ENCODE measurements at regions of chr10 and their contacts with region 1.

Region 1: DNA sequence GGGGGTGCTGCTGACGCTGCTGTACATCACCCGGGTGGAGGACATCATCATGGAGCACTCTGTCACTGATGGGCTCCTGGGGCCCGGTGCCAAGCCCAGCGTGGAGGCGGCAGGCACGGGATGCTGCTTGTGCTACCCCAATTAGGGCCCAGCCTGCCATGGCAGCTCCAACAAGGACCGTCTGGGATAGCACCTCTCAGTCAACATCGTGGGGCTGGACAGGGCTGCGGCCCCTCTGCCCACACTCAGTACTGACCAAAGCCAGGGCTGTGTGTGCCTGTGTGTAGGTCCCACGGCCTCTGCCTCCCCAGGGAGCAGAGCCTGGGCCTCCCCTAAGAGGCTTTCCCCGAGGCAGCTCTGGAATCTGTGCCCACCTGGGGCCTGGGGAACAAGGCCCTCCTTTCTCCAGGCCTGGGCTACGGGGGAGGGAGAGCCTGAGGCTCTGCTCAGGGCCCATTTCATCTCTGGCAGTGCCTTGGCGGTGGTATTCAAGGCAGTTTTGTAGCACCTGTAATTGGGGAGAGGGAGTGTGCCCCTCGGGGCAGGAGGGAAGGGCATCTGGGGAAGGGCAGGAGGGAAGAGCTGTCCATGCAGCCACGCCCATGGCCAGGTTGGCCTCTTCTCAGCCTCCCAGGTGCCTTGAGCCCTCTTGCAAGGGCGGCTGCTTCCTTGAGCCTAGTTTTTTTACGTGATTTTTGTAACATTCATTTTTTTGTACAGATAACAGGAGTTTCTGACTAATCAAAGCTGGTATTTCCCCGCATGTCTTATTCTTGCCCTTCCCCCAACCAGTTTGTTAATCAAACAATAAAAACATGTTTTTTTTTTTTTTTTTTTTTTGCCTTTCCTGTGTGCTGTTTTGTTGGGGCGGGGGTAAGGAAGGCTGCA is 55.8 kb downstream of the TSPAN15 start:
- DNase-seq: peak in 1 of 9 experiments; percentile 48
- ATAC-seq: peak; percentile 6
- H3K4me3 ChIP-seq: peak overlapping the region in 1 of 2 experiments; percentile 10
- H3K4me3 Mint-ChIP-seq: peak overlapping the region; percentile 71
- H3K27ac ChIP-seq: no peak overlapping the region
- H3K27ac Mint-ChIP-seq: peak overlapping the region; percentile 62
- H3K4me1 ChIP-seq: peaks cover 4% of the 10 kb centered on the region
- H3K4me1 Mint-ChIP-seq: peaks cover 10% of the 10 kb centered on the region
- H3K27me3 ChIP-seq: no peaks in the 10 kb centered on the region
- H3K27me3 Mint-ChIP-seq: no peaks in the 10 kb centered on the region
- CTCF ChIP-seq: no peak

Region 2: DNA sequence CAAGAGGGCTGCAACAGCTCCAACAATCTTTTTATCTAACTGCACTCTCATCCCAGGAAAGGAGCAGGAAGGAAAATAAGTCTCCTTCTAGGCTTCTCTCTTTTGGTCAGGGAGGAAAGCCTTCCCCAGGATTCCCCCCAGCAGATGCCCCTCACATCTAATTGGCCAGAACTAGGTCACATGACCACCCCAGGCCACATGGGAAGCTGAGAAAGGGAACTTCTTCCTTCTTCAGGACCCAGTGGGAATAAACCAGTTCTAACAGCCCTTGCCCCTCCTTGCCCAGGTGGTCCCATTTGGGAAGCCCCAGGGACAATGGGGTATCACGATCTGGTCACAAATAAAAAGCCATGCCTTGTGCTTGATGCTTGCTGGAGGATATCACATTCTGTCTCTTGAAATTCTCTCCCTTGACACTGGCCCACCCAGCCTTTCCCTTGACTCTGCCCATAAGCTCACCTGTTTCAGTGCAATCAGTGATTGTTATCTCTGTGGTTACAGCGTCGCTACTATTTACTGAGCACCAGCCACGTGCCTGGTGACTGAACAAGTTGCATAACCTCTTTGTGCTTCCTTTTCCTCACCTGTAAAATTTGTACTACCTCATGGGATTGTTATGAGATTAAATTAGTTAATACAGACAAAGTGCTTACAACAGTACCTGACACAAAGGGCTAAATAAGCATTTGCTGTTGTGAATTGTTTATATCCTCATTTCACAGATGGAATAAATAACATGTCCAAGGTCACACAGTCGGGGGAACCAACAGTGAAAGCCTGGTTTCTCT is 81.4 kb before region 1 on chr10:
- CTCF ChIA-PET with region 1: interaction called, 6 read pairs
- POLR2A ChIA-PET with region 1: no interaction called
- intact Hi-C with region 1: loop called (anchors 1 to 5 kb)
- DNase-seq: peak in 5 of 9 experiments; percentile 23 to 76 (median 65)
- ATAC-seq: peak; percentile 84
- H3K4me3 ChIP-seq: no peak overlapping the region
- H3K4me3 Mint-ChIP-seq: no peak overlapping the region
- H3K27ac ChIP-seq: peak overlapping the region; percentile 32 to 44
- H3K27ac Mint-ChIP-seq: peak overlapping the region; percentile 69
- H3K4me1 ChIP-seq: peaks cover 36% of the 10 kb centered on the region
- H3K4me1 Mint-ChIP-seq: peaks cover 53% of the 10 kb centered on the region
- H3K27me3 ChIP-seq: no peaks in the 10 kb centered on the region
- H3K27me3 Mint-ChIP-seq: no peaks in the 10 kb centered on the region
- CTCF ChIP-seq: no peak

Region 3: DNA sequence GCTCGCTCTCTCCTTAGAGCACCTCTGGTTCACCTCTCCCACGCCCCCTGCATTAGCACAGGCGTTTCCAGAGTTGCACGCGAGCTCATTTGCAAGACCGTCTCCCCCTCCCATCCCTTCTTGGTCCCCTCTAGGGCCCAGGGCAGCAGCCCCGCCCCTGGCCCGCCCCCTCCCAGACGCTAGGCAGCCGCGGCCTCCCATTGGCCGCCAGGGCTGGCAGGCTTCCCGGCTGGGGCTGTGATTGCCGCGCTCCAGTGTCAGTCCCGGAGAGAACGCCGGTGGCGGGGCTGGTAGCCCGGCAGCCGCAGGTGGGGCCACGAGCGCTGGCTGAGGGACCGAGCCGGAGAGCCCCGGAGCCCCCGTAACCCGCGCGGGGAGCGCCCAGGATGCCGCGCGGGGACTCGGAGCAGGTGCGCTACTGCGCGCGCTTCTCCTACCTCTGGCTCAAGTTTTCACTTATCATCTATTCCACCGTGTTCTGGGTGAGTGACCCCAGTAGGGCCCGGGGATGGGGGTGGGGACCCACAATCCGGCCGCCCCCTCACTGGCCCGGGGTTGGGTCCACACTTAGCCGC is 55.8 kb before region 1 on chr10 and contains the start of gene TSPAN15:
- CTCF ChIA-PET with region 1: interaction called, 5 read pairs
- POLR2A ChIA-PET with region 1: no interaction called
- intact Hi-C with region 1: loop called in 1 of 2 experiments (anchors 5 kb)
- DNase-seq: peak; percentile 43 to 87 (median 79)
- ATAC-seq: peak; percentile 89
- H3K4me3 ChIP-seq: peak within 1 kb of the TSS; percentile 58 to 75
- H3K4me3 Mint-ChIP-seq: peak within 1 kb of the TSS; percentile 83
- H3K27ac ChIP-seq: no peak within 1 kb of the TSS
- H3K27ac Mint-ChIP-seq: no peak within 1 kb of the TSS
- H3K4me1 ChIP-seq: peaks cover 5% of the 10 kb centered on the region
- H3K4me1 Mint-ChIP-seq: peaks cover 17% of the 10 kb centered on the region
- H3K27me3 ChIP-seq: no peaks in the 10 kb centered on the region
- H3K27me3 Mint-ChIP-seq: no peaks in the 10 kb centered on the region
- CTCF ChIP-seq: no peak
- total RNA-seq, gene TSPAN15: 1.9 to 2.6 TPM

Region 4: DNA sequence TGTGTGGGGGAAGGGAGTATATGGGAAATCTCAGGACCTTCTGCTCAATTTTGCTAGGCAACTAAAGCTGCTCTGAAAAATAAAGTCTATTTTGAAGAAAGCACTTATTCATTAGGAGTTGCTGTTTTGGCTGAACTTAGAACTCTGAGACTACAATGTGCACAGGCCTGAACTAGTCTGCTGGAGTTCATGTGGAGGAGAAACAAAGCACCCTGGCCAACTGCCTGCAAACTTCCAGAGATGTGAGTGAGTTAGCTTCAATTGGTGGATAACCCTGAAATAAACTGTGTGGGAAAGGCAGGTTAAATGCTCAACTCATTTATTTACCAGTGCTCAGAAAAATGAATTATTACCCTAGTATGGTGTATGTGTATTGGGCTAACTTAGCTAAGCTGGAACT is 105.7 kb after region 1 on chr10:
- CTCF ChIA-PET with region 1: no interaction called
- POLR2A ChIA-PET with region 1: no interaction called
- intact Hi-C with region 1: no loop called
- DNase-seq: no peak
- ATAC-seq: no peak
- H3K4me3 ChIP-seq: no peak overlapping the region
- H3K4me3 Mint-ChIP-seq: no peak overlapping the region
- H3K27ac ChIP-seq: no peak overlapping the region
- H3K27ac Mint-ChIP-seq: no peak overlapping the region
- H3K4me1 ChIP-seq: no peaks in the 10 kb centered on the region
- H3K4me1 Mint-ChIP-seq: no peaks in the 10 kb centered on the region
- H3K27me3 ChIP-seq: no peaks in the 10 kb centered on the region
- H3K27me3 Mint-ChIP-seq: no peaks in the 10 kb centered on the region
- CTCF ChIP-seq: no peak

Region 5: GRCh38 chr10:69639291-69640195 is 132.5 kb after region 1 on chr10:
- CTCF ChIA-PET with region 1: interaction called, 42 read pairs
- POLR2A ChIA-PET with region 1: no interaction called
- intact Hi-C with region 1: no loop called
- DNase-seq: peak; percentile 43 to 83 (median 71)
- ATAC-seq: peak; percentile 76
- H3K4me3 ChIP-seq: no peak overlapping the region
- H3K4me3 Mint-ChIP-seq: no peak overlapping the region
- H3K27ac ChIP-seq: no peak overlapping the region
- H3K27ac Mint-ChIP-seq: no peak overlapping the region
- H3K4me1 ChIP-seq: no peaks in the 10 kb centered on the region
- H3K4me1 Mint-ChIP-seq: no peaks in the 10 kb centered on the region
- H3K27me3 ChIP-seq: peaks cover 0 to 2% of the 10 kb centered on the region in 2 experiments
- H3K27me3 Mint-ChIP-seq: peaks cover 7% of the 10 kb centered on the region
- CTCF ChIP-seq: peak; percentile 86

Region 6: DNA sequence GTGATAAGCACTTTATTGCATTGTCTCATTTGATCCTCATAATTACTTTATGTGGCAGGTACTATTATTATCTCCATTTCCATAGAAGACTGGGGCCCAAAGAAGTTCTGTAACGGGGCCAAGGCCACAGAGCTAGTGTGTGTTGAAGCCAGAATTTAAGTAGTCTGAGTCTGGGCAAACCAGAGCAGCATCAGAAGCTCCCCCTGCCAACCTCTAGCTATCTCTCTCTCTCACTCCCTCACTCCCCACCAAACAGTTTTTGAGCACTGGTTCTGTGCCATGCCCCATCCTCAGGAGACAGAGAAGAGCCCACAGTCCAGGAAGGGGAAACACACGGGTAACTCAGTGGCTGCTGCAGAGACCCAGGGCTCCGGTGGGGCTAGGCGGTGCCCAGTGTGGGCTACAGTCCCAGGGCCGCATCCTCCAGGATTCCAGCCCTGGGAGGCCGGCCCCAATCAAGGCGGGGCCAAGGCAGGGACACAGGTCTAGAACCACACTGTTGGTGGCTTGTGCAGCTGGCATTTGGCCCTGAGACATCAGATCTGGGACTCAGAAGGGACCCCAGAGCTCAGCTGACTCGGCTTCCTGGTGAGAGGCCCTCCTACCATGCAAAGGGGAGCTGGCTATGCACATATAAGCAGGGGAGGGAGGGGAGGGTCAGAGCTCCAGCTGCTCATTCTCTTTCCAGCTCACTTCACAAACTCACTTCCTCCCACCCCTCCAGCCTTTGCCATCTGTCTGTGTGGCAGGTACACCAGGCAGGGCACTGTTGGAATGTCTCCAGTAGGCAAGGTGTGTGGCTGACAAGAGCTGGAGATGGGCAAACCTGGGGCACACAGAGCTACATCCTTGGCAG is 329.0 kb after region 1 on chr10:
- CTCF ChIA-PET with region 1: no interaction called
- POLR2A ChIA-PET with region 1: no interaction called
- intact Hi-C with region 1: no loop called
- DNase-seq: no peak
- ATAC-seq: no peak
- H3K4me3 ChIP-seq: no peak overlapping the region
- H3K4me3 Mint-ChIP-seq: no peak overlapping the region
- H3K27ac ChIP-seq: no peak overlapping the region
- H3K27ac Mint-ChIP-seq: no peak overlapping the region
- H3K4me1 ChIP-seq: no peaks in the 10 kb centered on the region
- H3K4me1 Mint-ChIP-seq: no peaks in the 10 kb centered on the region
- H3K27me3 ChIP-seq: peaks cover 0 to 2% of the 10 kb centered on the region in 2 experiments
- H3K27me3 Mint-ChIP-seq: peaks cover 3% of the 10 kb centered on the region
- CTCF ChIP-seq: no peak